Activated CD4-positive, alpha-beta T cell treated with anti-CD3 and anti-CD28 coated beads, Interleukin-2, amount 10 ng/mL, durations not matched to agents 7 days and 5 days (primary cell): ENCODE measurements at regions of chr3 and their contacts with region 1.

Region 1: GRCh38 chr3:157159762-157160657 is at the start of gene CCNL1:
- DNase-seq: peak; percentile 95
- H3K4me3 Mint-ChIP-seq: peak within 1 kb of the TSS; percentile 97
- H3K27ac Mint-ChIP-seq: peak within 1 kb of the TSS; percentile 100
- H3K4me1 Mint-ChIP-seq: peaks cover 56% of the 10 kb centered on the region
- H3K27me3 Mint-ChIP-seq: no peaks in the 10 kb centered on the region
- total RNA-seq, gene CCNL1: 220 to 258 TPM

Region 2: GRCh38 chr3:157174649-157175498 is 14.9 kb after region 1 on chr3:
- CTCF ChIA-PET with region 1: interaction called, 25 read pairs
- POLR2A ChIA-PET with region 1: interaction called, 54 read pairs
- DNase-seq: peak; percentile 99
- H3K4me3 Mint-ChIP-seq: peak overlapping the region; percentile 91
- H3K27ac Mint-ChIP-seq: peak overlapping the region; percentile 98
- H3K4me1 Mint-ChIP-seq: peaks cover 28% of the 10 kb centered on the region
- H3K27me3 Mint-ChIP-seq: no peaks in the 10 kb centered on the region